ENCODE measurements at regions of chr9 and their contacts with region 1.

Region 1: DNA sequence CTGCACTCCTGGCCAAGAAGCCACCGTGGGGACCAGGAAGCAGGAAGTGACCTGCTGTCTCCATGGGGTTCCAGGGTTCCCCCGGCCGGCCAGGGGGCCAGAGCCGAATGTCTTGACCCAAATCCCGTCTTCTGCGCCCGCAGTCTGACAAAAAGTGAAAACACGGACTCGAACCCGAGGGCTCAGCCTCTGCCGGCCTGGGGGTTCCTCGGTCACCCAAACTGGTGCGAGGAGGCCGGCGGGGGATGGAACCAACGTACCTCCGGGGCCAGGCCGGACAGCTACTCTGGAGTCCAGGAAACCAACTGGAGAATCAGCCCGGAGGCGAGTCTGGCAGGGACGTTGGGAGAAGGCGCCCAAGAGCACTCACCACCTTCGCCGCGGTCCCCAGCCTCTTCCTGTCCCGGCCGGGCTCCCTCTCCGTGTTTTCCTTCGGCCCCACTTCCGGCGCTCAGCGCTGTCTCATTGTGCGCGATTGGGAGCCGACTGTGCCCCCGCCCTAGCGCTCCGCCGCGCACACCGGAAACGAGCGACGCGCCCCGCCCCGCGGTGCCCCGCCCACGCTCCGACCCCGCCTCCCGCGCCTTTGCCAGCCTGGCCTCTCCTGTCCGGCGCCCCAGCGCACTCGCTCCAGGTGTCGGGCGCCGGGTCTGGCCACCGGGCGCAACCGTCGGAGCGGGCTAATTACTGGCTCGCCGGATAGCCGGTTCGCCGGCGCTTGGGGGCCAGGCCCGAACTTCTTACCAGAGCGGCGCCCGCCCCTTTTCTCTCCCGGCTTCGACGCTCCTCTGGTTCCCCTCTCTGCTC is at the start of gene TUT7:
- DNase-seq: peak; percentile 96 to 98
- ATAC-seq: peak; percentile 97 to 99 (median 98)
- H3K4me3 ChIP-seq: peak within 1 kb of the TSS; percentile 83
- H3K27ac ChIP-seq: peak within 1 kb of the TSS; percentile 94
- H3K4me1 ChIP-seq: peaks cover 45% of the 10 kb centered on the region
- H3K27me3 ChIP-seq: no peaks in the 10 kb centered on the region
- CTCF ChIP-seq: no peak
- total RNA-seq, gene TUT7: 13.5 to 21.3 (median 18.2) TPM

Region 2: DNA sequence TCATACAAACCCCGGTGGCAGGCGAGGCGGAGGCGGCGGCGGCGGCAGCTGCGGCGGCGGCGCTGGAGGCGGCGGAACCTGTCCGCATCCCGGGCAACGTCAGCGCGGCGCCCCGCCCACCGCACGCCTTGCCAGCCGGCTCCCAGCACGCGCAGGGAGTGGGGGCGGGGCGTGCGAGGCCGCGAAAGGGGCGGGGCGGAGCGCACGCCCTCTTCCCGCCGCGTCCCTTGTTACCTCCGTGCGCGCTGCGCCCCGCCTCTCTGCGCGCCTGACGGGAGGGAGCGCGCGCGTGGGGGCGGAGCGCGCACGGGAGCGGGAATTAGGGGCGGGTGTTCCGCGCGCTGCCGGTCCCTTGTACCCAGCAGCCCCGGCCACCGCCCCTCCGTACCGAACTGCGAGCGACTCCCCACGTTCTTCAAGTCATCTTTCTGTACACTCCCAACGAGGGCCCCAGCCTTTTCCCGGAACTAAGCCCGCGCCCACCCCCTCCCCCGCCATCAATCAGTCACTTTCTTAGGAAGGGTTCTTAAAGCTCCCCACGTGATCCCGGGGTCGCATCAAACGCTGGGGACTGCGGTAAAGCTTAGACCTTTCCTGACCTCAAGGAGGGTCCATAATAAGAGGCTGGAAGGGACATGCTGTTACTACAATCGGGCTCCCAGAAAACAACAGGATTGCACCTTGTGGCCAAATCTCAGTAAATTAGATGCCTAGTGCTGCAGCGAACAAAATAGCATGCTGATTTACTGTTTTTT is 612.2 kb before region 1 on chr9 and contains the start of gene AGTPBP1:
- intact Hi-C with region 1: loop called in 1 of 2 experiments (anchors 10 kb)
- DNase-seq: peak; percentile 97 to 98
- ATAC-seq: peak; percentile 96 to 99 (median 98)
- H3K4me3 ChIP-seq: peak within 1 kb of the TSS; percentile 97
- H3K27ac ChIP-seq: peak within 1 kb of the TSS; percentile 94
- H3K4me1 ChIP-seq: peaks cover 24% of the 10 kb centered on the region
- H3K27me3 ChIP-seq: no peaks in the 10 kb centered on the region
- CTCF ChIP-seq: no peak
- total RNA-seq, gene AGTPBP1: 19.6 to 25.9 (median 21.9) TPM

Region 3: DNA sequence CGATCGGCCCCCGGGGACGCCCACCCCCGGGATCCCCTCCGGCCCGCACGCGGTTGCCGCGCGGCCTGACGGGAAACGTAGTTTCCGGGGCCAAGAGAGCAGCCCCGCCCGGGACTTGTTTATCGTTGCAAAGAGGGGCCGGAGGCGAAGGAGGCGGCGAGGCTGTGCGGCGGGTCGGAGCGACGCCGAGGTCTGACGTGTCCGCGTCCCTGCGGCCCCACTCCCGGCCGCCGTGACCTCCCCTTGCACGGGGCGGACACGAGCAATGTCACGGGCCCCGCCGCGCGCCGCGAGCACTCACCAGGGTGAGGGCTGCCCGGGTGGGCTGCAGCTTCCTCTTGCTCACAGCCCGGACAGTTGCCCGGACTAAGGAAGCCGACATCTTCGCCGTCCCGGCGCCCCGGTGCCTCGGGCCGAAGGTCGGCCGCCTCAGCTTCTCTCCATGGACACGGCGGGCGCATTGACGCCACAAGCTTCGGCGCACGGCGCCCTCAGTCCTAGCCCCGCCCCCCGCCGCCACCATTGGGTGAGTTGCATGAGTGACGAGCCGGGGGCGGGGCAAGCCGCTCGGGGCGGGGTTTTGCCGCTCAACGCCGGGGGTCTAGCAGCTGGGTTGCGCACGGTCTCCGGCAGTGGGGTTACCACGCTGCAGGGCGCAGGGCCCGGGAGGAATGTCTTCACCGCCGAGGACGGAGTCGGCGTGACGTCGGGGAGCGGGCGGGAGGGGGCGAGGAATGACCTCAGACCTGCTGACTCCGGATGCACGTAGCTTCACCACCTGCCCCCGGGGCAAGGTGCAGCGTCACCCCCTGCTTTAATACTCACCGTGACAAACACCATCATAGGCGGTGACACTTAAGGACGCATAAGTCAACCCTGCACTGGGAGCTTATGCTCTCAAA is 71.9 kb before region 1 on chr9 and contains the start of gene ISCA1:
- intact Hi-C with region 1: loop called in 1 of 2 experiments (anchors 5 kb)
- DNase-seq: peak; percentile 98 to 99
- ATAC-seq: peak; percentile 95 to 96 (median 96)
- H3K4me3 ChIP-seq: peak within 1 kb of the TSS; percentile 89
- H3K27ac ChIP-seq: peak within 1 kb of the TSS; percentile 99
- H3K4me1 ChIP-seq: peaks cover 32% of the 10 kb centered on the region
- H3K27me3 ChIP-seq: no peaks in the 10 kb centered on the region
- CTCF ChIP-seq: no peak
- total RNA-seq, gene ISCA1: 44.5 to 66.4 (median 50.0) TPM

Region 4: DNA sequence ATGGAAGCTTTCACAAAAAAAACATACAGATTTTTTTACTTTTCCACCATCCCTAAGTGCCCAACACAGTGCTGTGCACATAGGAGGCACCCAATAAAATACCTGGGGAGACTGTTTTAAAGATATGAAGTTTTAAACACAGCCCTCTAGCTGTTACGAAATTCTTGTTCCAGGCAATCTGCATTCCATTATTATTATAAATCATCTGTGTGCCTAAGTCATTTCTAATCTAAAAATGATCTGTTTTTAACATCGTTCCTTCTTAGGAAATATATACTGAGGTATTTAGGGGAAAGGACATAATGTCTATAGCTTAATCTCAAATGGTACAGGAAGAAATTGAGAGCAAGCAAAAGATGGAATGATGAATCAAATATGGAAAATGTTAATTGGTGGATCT is 39.1 kb before region 1 on chr9:
- intact Hi-C with region 1: loop called in 1 of 2 experiments (anchors 5 kb)
- DNase-seq: no peak
- ATAC-seq: no peak
- H3K4me3 ChIP-seq: no peak overlapping the region
- H3K27ac ChIP-seq: no peak overlapping the region
- H3K4me1 ChIP-seq: no peaks in the 10 kb centered on the region
- H3K27me3 ChIP-seq: no peaks in the 10 kb centered on the region
- CTCF ChIP-seq: no peak

Region 5: GRCh38 chr9:86405926-86406325 is 51.7 kb after region 1 on chr9:
- intact Hi-C with region 1: loop called in 1 of 2 experiments (anchors 2 kb)
- DNase-seq: no peak
- ATAC-seq: peak; percentile 80 to 90 (median 89)
- H3K4me3 ChIP-seq: peak overlapping the region; percentile 30
- H3K27ac ChIP-seq: peak overlapping the region; percentile 70
- H3K4me1 ChIP-seq: peaks cover 25% of the 10 kb centered on the region
- H3K27me3 ChIP-seq: no peaks in the 10 kb centered on the region
- CTCF ChIP-seq: no peak